Ovary (tissue), 10 donors: ENCODE measurements at regions of chr10 and their contacts with region 1.

Region 1: GRCh38 chr10:4767033-4767814 is 58.8 kb upstream of the AKR1E2 start:
- DNase-seq: peak in 1 of 5 donors; percentile 36
- H3K4me3 ChIP-seq: no peak overlapping the region
- H3K27ac ChIP-seq: no peak overlapping the region
- H3K4me1 ChIP-seq: no peaks in the 10 kb centered on the region
- H3K27me3 ChIP-seq: no peaks in the 10 kb centered on the region
- CTCF ChIP-seq: peak; percentile 38 to 74 (median 50)
- EP300 ChIP-seq: no peak
- POLR2A ChIP-seq: no peak

Region 2: DNA sequence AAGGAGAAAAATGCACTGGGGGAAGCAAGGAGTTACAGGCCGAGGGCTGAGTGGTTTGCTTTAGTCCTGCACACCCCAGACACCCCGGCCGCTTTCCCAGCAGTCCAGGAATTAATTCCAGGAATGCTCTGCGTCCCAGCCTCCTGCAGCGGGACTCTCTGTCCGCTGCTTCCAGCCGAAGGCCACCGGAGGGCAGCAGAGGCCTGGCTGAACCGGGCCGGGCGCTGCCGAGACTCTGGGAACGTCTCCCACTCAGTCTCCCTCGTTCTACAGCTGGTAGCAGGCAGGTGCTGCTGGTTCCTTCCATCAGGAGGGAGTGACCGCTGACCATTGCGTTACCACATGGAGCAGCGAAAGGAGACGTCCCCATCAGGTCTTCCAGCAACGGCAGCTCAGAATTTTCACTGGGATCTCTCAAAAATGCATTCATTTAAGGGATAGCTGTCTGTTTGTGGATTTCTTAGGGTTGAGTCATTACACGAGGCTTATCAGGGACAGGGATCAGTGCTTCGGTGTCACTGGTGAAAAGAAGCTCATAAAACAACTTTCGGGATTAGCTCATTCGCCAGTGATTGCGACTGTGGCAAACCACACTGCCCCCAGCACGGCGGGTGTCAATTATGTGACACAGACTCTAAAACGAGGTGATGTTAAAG is 1569.7 kb before region 1 on chr10:
- intact Hi-C with region 1: loop called (anchors 10 kb)
- DNase-seq: peak; percentile 71 to 84 (median 78)
- H3K4me3 ChIP-seq: no peak overlapping the region
- H3K27ac ChIP-seq: no peak overlapping the region
- H3K4me1 ChIP-seq: no peaks in the 10 kb centered on the region
- H3K27me3 ChIP-seq: no peaks in the 10 kb centered on the region
- CTCF ChIP-seq: peak; percentile 76 to 83 (median 80)
- EP300 ChIP-seq: no peak
- POLR2A ChIP-seq: no peak

Region 3: GRCh38 chr10:3208481-3209406 is 1558.5 kb before region 1 on chr10:
- intact Hi-C with region 1: loop called in 1 of 4 experiments (anchors 10 kb)
- DNase-seq: no peak
- H3K4me3 ChIP-seq: no peak overlapping the region
- H3K27ac ChIP-seq: no peak overlapping the region
- H3K4me1 ChIP-seq: no peaks in the 10 kb centered on the region
- H3K27me3 ChIP-seq: no peaks in the 10 kb centered on the region
- CTCF ChIP-seq: no peak
- EP300 ChIP-seq: no peak
- POLR2A ChIP-seq: no peak

Region 4: DNA sequence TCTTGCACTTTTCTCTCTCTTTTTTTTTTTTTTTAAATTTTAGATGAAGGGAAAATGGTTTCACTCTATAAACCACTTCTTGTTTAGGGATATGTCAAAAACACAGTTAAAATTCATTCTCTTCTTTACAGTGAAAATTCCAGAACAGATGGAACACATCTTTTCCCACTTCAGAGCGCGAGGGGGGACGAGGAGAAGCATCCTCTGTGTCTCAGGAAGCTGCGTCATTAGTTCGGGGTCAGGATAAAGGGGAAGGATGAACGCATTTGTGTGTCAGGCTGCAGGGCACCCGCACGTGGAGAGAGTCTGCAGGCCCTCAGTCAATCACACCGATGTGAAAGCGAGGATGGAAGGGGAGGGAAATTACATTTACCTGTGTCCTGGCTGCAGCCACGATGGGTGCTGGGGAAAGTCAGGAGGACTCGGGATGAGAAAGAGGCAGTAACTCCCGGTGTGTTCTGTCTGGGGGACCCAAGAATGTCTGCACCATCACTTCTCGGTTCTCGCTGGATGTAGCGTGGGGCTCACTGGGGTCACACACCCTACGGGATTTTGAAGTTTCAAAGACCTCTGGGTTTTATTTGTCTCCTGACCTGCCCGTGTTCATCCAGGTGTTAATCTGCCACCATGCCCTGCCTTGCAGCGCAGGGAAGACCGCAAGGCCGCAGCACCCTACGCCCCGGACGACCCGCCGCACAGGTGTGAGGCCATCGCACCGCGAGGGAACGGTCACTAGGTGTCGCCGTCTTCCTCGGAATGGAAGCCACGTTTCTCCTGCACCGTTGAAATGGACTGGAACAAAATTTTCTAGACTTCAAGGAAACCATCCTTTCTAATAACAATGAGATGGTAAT is 1527.9 kb before region 1 on chr10:
- intact Hi-C with region 1: loop called in 3 of 4 experiments (anchors 10 kb)
- DNase-seq: peak; percentile 55 to 79 (median 74)
- H3K4me3 ChIP-seq: no peak overlapping the region
- H3K27ac ChIP-seq: no peak overlapping the region
- H3K4me1 ChIP-seq: no peaks in the 10 kb centered on the region
- H3K27me3 ChIP-seq: no peaks in the 10 kb centered on the region
- CTCF ChIP-seq: peak; percentile 68 to 81 (median 74)
- EP300 ChIP-seq: no peak
- POLR2A ChIP-seq: peak; percentile 7

Region 5: DNA sequence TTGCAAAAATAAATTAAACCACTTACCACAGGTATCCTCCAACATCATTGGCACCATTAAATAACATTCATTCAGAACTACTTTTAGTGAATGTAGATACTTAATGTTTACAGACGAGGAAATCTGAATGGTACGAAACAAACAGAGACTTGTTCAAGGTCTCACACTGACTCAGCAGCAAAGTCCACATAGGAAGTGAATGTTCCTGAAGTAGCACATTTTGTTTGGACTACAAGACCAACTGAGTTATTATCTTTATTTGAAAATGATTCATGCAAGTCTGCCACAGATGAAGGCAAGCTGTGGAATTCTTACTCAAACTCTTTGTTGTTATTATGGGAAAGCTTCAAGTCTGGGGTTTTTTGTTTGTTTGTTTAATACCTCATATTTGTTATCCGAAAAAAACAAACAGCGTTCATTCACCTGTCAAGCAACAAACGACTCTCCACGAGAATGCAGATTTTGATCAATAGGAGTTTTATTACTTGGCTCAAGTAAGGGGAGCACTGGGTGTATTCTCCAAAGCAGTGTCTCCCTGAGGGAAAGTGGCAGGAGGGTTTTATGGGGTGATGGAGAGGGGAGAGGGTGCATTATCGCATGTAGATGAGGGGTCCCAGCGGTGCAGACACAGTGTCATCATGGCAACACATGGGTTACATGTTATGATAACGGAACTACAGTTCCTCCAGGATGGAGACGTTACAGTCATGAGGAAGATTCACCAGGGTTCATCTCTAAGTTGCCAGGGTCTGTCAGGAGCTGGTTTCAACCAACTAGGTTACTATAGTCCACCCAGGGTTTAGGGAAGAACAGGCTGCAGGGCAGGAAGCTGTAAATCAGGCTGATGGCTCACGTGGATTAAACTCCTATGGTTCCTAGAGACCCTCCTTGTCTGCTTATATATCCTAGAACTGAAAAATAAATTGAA is 88.9 kb before region 1 on chr10:
- intact Hi-C with region 1: no loop called
- DNase-seq: peak in 1 of 5 donors; percentile 14
- H3K4me3 ChIP-seq: no peak overlapping the region
- H3K27ac ChIP-seq: no peak overlapping the region
- H3K4me1 ChIP-seq: peaks cover 2% of the 10 kb centered on the region
- H3K27me3 ChIP-seq: no peaks in the 10 kb centered on the region
- CTCF ChIP-seq: no peak
- EP300 ChIP-seq: no peak
- POLR2A ChIP-seq: no peak